Left cardiac atrium (tissue), 4 donors: ENCODE measurements at regions of chr5 and their contacts with region 1.

Region 1: GRCh38 chr5:157172403-157172802 is 6.3 kb upstream of the GARIN3 start:
- DNase-seq: no peak
- ATAC-seq: no peak

Region 2: DNA sequence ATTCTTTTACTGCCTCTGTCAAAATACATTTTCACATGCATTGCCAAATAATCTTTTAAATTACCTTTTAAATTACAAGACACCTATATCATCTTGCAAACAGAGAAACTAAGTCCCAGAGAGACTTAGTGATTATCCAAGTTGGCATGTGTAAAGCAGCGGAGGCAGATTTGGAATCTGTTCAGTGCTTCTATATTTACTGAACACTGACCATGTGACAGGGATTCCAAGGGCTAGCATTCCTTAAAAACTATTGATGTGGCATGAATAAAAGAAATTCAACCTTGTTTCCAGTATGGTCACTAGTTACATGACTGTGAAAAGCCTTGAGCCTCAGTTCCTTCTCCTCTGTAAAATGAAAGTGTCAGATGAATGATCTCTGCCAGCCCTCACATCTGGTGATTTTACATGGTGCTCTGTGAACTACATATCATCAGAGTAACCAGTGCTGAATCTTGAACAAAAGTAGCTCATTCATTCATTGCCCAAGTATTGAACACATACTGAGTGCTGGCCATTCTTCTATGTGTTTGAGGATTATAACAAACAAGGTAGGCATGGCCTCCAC is 394.2 kb before region 1 on chr5:
- intact Hi-C with region 1: no loop called
- DNase-seq: no peak
- ATAC-seq: no peak

Region 3: GRCh38 chr5:157233515-157233914 is 61.1 kb after region 1 on chr5:
- intact Hi-C with region 1: loop called in 1 of 2 experiments (anchors 10 kb)
- DNase-seq: no peak
- ATAC-seq: no peak